ENCODE measurements at regions of chr17 and their contacts with region 1.

Region 1: DNA sequence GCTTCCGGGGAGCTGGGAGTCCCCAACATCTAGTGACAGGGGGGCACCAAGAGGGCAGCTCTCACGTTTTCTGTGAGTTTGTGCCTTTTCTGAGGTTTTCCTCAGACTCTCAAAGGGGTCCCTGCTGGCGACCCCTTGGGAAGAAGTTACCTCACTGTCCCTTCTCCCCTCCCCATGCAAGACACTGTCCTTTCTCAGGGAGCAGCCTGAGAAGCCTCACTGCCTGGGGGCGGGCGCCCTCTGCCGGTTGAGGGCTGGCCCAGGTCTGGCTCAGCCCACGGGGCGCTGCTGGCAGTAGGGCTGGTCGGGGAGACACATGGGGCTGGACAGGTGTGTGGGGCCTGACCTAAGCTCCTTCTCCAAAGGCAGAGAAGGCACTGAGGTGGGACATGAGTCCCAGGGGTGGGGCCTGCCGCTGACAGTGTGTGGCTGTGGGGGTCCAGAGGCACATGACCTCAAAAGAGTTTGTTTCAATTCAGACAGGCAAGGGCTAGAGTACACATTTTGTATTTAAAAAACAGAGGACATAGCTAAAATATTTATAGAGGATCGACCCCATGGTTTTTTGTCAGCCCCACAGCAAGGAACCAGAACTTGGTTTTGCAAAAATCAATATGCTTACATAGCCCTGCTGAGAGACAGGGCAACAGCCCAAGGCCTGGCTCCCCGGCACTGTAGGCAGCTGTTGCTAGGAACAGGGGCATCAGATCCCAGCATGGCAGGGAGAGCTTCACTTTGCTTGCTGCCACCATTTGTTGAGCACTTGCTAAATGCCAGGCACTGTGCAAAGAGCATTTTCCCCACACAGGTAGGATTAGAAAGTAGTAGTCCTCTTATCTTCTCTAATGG is 18.5 kb upstream of the ALDH3A1 start:
- DNase-seq: no peak
- ATAC-seq: peak; percentile 98
- H3K4me3 ChIP-seq: no peak overlapping the region
- H3K27ac ChIP-seq: no peak overlapping the region
- H3K4me1 ChIP-seq: peaks cover 12% of the 10 kb centered on the region
- H3K27me3 ChIP-seq: no peaks in the 10 kb centered on the region
- CTCF ChIP-seq: peak; percentile 98 to 99 (median 99)
- EP300 ChIP-seq: no peak
- POLR2A ChIP-seq: no peak
- RAD21 ChIP-seq: peak; percentile 99

Region 2: GRCh38 chr17:19369846-19370492 is 396.7 kb before region 1 on chr17:
- CTCF ChIA-PET with region 1: no interaction called
- POLR2A ChIA-PET with region 1: no interaction called
- RAD21 ChIA-PET with region 1: interaction called, 3 read pairs
- SMC1A ChIA-PET with region 1: interaction called, 3 read pairs
- in situ Hi-C with region 1: loop called (anchors 5 kb)
- intact Hi-C with region 1: no loop called
- DNase-seq: no peak
- ATAC-seq: peak; percentile 29; the same call in 2 of the 3 replicates
- H3K4me3 ChIP-seq: no peak overlapping the region
- H3K27ac ChIP-seq: no peak overlapping the region
- H3K4me1 ChIP-seq: peaks cover 26% of the 10 kb centered on the region
- H3K27me3 ChIP-seq: no peaks in the 10 kb centered on the region
- CTCF ChIP-seq: no peak
- EP300 ChIP-seq: no peak
- POLR2A ChIP-seq: no peak
- RAD21 ChIP-seq: no peak

Region 3: GRCh38 chr17:19513897-19514488 is 252.7 kb before region 1 on chr17:
- CTCF ChIA-PET with region 1: interaction called, 52 read pairs
- POLR2A ChIA-PET with region 1: no interaction called
- RAD21 ChIA-PET with region 1: interaction called, 7 read pairs
- SMC1A ChIA-PET with region 1: interaction called, 22 read pairs
- in situ Hi-C with region 1: loop called (anchors 5 kb)
- intact Hi-C with region 1: loop called (anchors 1 kb)
- DNase-seq: no peak
- ATAC-seq: peak; percentile 86
- H3K4me3 ChIP-seq: no peak overlapping the region
- H3K27ac ChIP-seq: no peak overlapping the region
- H3K4me1 ChIP-seq: peaks cover 2% of the 10 kb centered on the region; the same call in 1 of the 2 replicates
- H3K27me3 ChIP-seq: no peaks in the 10 kb centered on the region
- CTCF ChIP-seq: peak; percentile 82 to 90 (median 88)
- EP300 ChIP-seq: no peak
- POLR2A ChIP-seq: no peak
- RAD21 ChIP-seq: peak; percentile 93

Region 4: GRCh38 chr17:19648475-19649406 is 117.9 kb before region 1 on chr17 and contains the start of gene ALDH3A2:
- CTCF ChIA-PET with region 1: interaction called, 19 read pairs
- POLR2A ChIA-PET with region 1: no interaction called
- RAD21 ChIA-PET with region 1: no interaction called
- SMC1A ChIA-PET with region 1: interaction called, 8 read pairs
- in situ Hi-C with region 1: no loop called
- intact Hi-C with region 1: loop called (anchors 5 kb)
- DNase-seq: peak; percentile 68
- ATAC-seq: peak; percentile 98
- H3K4me3 ChIP-seq: peak within 1 kb of the TSS; percentile 65
- H3K27ac ChIP-seq: peak within 1 kb of the TSS; percentile 74
- H3K4me1 ChIP-seq: peaks cover 8% of the 10 kb centered on the region; the same call in 1 of the 2 replicates
- H3K27me3 ChIP-seq: no peaks in the 10 kb centered on the region
- CTCF ChIP-seq: 0 out of 6 replicates have a peak, but pooled peaks of 1 of the 3 experiments have one; percentile 11
- EP300 ChIP-seq: no peak
- POLR2A ChIP-seq: peak; percentile 95
- RAD21 ChIP-seq: no peak
- polyA plus RNA-seq, gene ALDH3A2: 5.0 to 7.9 TPM

Region 5: DNA sequence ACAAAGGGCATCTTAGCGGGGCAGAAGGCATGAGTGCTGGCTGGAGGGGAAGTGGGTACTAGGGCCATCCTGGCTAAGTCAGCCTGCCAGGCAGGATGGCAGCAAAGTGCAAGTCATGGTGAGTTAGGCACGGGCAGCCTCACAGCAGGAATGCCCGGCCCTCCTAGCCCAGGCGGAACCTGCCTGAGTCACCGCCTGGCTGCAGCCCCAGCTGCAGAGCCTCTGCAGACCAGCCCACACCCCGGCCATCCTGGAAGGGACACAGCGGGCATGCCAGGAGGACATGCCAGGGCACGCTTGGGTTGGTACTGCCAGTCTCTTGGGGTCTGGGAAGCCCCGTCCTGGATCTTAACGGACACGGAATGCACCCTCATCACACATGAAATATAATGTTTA is 13.6 kb before region 1 on chr17:
- CTCF ChIA-PET with region 1: interaction called, 11 read pairs
- POLR2A ChIA-PET with region 1: no interaction called
- RAD21 ChIA-PET with region 1: no interaction called
- SMC1A ChIA-PET with region 1: interaction called, 3 read pairs
- in situ Hi-C with region 1: no loop called
- intact Hi-C with region 1: no loop called
- DNase-seq: no peak
- ATAC-seq: no peak
- H3K4me3 ChIP-seq: no peak overlapping the region
- H3K27ac ChIP-seq: no peak overlapping the region
- H3K4me1 ChIP-seq: peaks cover 45% of the 10 kb centered on the region
- H3K27me3 ChIP-seq: no peaks in the 10 kb centered on the region
- CTCF ChIP-seq: no peak
- EP300 ChIP-seq: no peak
- POLR2A ChIP-seq: no peak
- RAD21 ChIP-seq: no peak